Activated CD8-positive, alpha-beta T cell treated with anti-CD3 and anti-CD28 coated beads, Interleukin-2, amount 10 ng/mL, durations not matched to agents 7 days and 5 days (primary cell): ENCODE measurements at regions of chr2 and their contacts with region 1.

Region 1: GRCh38 chr2:121400201-121400600 is 115.2 kb upstream of the TFCP2L1 start:
- DNase-seq: no peak
- ATAC-seq: no peak
- H3K4me3 Mint-ChIP-seq: no peak overlapping the region
- H3K27ac Mint-ChIP-seq: no peak overlapping the region
- H3K4me1 Mint-ChIP-seq: peaks cover 3% of the 10 kb centered on the region
- H3K27me3 Mint-ChIP-seq: no peaks in the 10 kb centered on the region

Region 2: DNA sequence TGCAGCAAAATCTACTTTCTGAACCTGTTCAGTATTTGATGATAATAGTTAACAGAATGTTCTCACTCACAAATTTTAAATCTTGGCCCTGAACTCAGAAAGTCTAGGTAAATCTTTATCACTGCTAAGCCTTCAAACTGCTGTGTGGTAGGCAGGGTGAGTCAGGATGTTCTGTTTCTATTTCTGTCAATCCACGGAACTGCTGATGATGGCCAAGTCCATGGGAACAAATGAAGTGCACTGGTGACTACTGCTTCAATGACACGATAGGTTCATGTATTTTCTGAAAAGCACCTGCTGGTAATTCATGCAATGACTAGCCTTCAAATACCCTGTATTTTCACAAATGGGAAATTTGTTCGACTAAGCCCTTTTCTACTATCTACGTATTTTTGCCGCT is 322.3 kb after region 1 on chr2:
- CTCF ChIA-PET with region 1: interaction called, 24 read pairs
- POLR2A ChIA-PET with region 1: no interaction called
- DNase-seq: no peak
- ATAC-seq: no peak
- H3K4me3 Mint-ChIP-seq: no peak overlapping the region
- H3K27ac Mint-ChIP-seq: no peak overlapping the region
- H3K4me1 Mint-ChIP-seq: peaks cover 14% of the 10 kb centered on the region
- H3K27me3 Mint-ChIP-seq: no peaks in the 10 kb centered on the region